Right cardiac atrium (tissue), 5 donors: ENCODE measurements at regions of chr3 and their contacts with region 1.

Region 1: DNA sequence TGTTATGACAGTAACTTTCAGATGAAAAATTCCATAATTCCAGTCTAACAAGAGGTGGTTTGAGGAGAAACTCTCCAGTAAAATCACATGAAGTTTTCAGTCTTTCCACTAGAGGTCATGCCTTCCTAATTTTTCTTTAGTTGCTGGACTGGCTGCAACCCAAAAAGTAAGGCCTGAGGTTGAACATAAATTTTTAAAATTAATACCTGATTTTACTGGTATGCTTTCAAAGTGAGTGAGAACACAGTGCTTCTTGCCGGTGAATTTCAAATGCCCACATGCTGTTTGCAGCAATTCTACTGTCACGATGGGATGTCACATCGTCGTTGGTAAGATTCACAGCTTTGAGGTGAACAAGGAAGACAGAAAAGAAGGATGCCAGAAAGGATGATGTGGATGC is 89.0 kb upstream of the FGF12 start:
- DNase-seq: no peak
- ATAC-seq: no peak
- H3K4me3 ChIP-seq: no peak overlapping the region
- H3K27ac ChIP-seq: no peak overlapping the region
- H3K4me1 ChIP-seq: peaks cover 7% of the 10 kb centered on the region
- H3K27me3 ChIP-seq: no peaks in the 10 kb centered on the region

Region 2: GRCh38 chr3:192778508-192778907 is 37.8 kb before region 1 on chr3:
- intact Hi-C with region 1: no loop called
- DNase-seq: no peak
- ATAC-seq: no peak
- H3K4me3 ChIP-seq: no peak overlapping the region
- H3K27ac ChIP-seq: no peak overlapping the region
- H3K4me1 ChIP-seq: no peaks in the 10 kb centered on the region
- H3K27me3 ChIP-seq: no peaks in the 10 kb centered on the region

Region 3: GRCh38 chr3:192917404-192918274 is 101.3 kb after region 1 on chr3 and contains the start of gene MB21D2:
- intact Hi-C with region 1: loop called in 3 of 4 experiments (anchors 5 to 10 kb)
- DNase-seq: peak; percentile 91 to 95 (median 95)
- ATAC-seq: peak; percentile 95 to 96
- H3K4me3 ChIP-seq: peak within 1 kb of the TSS; percentile 94
- H3K27ac ChIP-seq: peak within 1 kb of the TSS; percentile 90
- H3K4me1 ChIP-seq: no peaks in the 10 kb centered on the region
- H3K27me3 ChIP-seq: no peaks in the 10 kb centered on the region
- total RNA-seq, gene MB21D2: 3.1 to 3.9 (median 3.7) TPM

Region 4: DNA sequence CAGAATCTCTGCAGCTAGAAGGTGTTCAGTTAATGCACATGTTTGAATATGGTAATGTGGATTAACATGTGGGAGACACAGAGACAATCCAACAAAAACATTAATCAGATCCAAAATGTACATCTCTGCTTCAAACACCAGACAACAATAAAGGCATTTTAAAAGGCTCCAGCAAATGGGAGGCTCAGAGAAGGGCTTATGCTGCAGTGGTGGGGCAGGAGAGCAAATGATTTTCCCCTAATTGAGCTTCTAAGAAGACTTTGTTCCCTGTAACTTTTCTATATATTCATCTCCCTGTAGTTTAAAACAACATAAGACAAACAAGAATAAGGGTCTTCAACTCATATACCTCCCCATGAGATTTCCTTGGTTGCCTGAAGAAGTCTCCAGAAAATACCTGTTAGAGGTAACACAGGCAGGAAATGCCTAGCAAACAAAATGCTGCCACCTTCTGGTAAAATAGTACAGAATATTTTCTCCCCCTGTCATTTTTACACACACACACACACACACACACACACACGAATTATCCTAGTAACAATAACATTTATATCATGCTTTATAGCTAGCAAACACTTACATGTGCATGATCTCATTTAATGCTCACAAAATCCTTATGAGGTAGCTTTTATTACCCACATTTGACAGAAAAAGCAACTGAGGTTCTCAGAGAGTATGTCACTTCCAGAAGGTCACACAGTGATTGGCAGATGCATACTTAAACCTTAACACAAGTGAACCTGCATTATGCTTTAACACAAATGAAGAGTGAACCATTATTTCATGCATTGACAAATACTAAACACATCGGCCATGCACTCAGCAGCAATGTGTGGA is 224.7 kb after region 1 on chr3:
- intact Hi-C with region 1: loop called (anchors 2 to 5 kb)
- DNase-seq: no peak
- ATAC-seq: no peak
- H3K4me3 ChIP-seq: no peak overlapping the region
- H3K27ac ChIP-seq: no peak overlapping the region
- H3K4me1 ChIP-seq: no peaks in the 10 kb centered on the region
- H3K27me3 ChIP-seq: no peaks in the 10 kb centered on the region

Region 5: GRCh38 chr3:193367868-193368267 is 551.5 kb after region 1 on chr3:
- intact Hi-C with region 1: no loop called
- DNase-seq: no peak
- ATAC-seq: no peak
- H3K4me3 ChIP-seq: no peak overlapping the region
- H3K27ac ChIP-seq: no peak overlapping the region
- H3K4me1 ChIP-seq: no peaks in the 10 kb centered on the region
- H3K27me3 ChIP-seq: no peaks in the 10 kb centered on the region

Region 6: DNA sequence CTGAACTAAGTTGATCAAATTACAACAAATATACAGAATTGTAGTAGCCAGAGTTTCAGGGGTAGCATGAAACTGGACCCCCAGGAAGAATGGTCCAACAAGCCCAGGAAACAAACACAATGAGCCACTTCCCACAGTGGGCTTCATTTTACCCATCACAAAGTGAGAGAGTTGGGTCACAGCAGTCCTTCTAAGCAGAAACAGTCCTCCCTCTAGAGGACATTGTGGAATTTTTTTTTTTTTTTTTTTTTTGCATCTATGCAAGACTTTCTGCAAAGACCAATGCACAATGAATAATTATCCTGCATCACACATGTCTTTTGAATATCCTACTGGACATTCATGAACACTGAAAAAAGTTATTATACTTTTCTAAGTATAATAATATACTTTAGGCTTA is 636.0 kb after region 1 on chr3:
- intact Hi-C with region 1: loop called in 1 of 4 experiments (anchors 10 kb)
- DNase-seq: no peak
- ATAC-seq: no peak
- H3K4me3 ChIP-seq: no peak overlapping the region
- H3K27ac ChIP-seq: no peak overlapping the region
- H3K4me1 ChIP-seq: no peaks in the 10 kb centered on the region
- H3K27me3 ChIP-seq: no peaks in the 10 kb centered on the region

Region 7: GRCh38 chr3:193465992-193466608 is 649.7 kb after region 1 on chr3:
- intact Hi-C with region 1: loop called in 2 of 4 experiments (anchors 10 kb)
- DNase-seq: no peak
- ATAC-seq: no peak
- H3K4me3 ChIP-seq: no peak overlapping the region
- H3K27ac ChIP-seq: no peak overlapping the region
- H3K4me1 ChIP-seq: no peaks in the 10 kb centered on the region
- H3K27me3 ChIP-seq: no peaks in the 10 kb centered on the region

Region 8: GRCh38 chr3:193572426-193572908 is 756.1 kb after region 1 on chr3:
- intact Hi-C with region 1: loop called (anchors 5 to 10 kb)
- DNase-seq: peak in 2 of 3 donors; percentile 35 to 61
- ATAC-seq: peak; percentile 65 to 66
- H3K4me3 ChIP-seq: no peak overlapping the region
- H3K27ac ChIP-seq: no peak overlapping the region
- H3K4me1 ChIP-seq: no peaks in the 10 kb centered on the region
- H3K27me3 ChIP-seq: no peaks in the 10 kb centered on the region